ENCODE measurements at regions of chr12 and their contacts with region 1.

Region 1: DNA sequence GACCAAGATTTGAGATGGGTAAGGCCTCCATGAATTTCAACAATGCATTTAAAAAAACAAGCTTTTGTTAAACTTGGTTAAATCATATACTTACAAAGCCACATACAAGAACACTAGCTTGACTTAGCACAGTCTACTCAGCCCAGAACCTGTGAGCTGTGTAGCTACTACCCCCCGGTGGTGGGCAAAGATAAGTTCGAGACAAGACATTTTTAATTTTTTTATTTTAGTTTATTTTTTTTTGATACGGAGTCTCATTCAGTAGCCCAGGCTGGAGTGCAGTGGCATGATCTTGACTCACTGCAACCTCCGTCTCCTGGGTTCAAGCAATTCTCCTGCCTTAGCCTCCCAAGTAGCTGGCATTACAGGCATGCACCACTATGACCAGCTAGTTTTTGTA is 3.7 kb upstream of the NECAP1 start:
- DNase-seq: peak; percentile 43 to 84 (median 67)
- H3K4me3 ChIP-seq: no peak overlapping the region
- H3K4me3 Mint-ChIP-seq: peak overlapping the region in 2 of 7 donors; percentile 28 to 77
- H3K27ac ChIP-seq: no peak overlapping the region
- H3K27ac Mint-ChIP-seq: peak overlapping the region; percentile 76 to 100 (median 88)
- H3K4me1 ChIP-seq: peaks cover 33% of the 10 kb centered on the region
- H3K4me1 Mint-ChIP-seq: peaks cover 43 to 59% (median 49%) of the 10 kb centered on the region in 3 donors
- H3K27me3 ChIP-seq: no peaks in the 10 kb centered on the region
- H3K27me3 Mint-ChIP-seq: peaks cover 0 to 3% of the 10 kb centered on the region in 2 donors

Region 2: DNA sequence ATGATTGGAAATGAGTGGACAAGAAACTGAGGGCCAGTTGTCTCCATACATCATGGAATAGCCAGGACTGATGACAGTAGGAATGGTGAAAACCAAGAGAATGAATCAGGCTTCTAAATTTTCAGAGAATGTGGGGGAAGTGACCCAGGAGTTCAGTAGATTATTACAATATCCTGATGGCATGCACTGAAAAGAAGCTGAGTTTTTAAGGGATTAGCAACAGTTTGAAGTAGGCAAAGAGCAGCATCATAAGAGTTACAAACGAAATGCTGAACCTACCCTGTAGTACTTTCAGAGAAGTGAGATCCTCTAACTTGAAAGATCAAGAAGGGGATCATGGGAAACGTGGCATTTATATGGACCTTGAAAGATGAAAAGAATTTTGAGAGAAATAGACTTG is 218.8 kb before region 1 on chr12:
- CTCF ChIA-PET with region 1: interaction called, 11 read pairs
- POLR2A ChIA-PET with region 1: interaction called, 3 read pairs
- DNase-seq: no peak
- H3K4me3 ChIP-seq: no peak overlapping the region
- H3K4me3 Mint-ChIP-seq: peak overlapping the region in 1 of 7 donors; percentile 34
- H3K27ac ChIP-seq: no peak overlapping the region
- H3K27ac Mint-ChIP-seq: no peak overlapping the region
- H3K4me1 ChIP-seq: no peaks in the 10 kb centered on the region
- H3K4me1 Mint-ChIP-seq: peaks cover 9 to 10% (median 9%) of the 10 kb centered on the region in 3 donors
- H3K27me3 ChIP-seq: no peaks in the 10 kb centered on the region
- H3K27me3 Mint-ChIP-seq: peaks cover 11 to 12% of the 10 kb centered on the region in 2 donors

Region 3: GRCh38 chr12:8026291-8026900 is 52.0 kb before region 1 on chr12:
- CTCF ChIA-PET with region 1: interaction called, 7 read pairs
- POLR2A ChIA-PET with region 1: interaction called, 15 read pairs
- DNase-seq: peak; percentile 92 to 98 (median 97)
- H3K4me3 ChIP-seq: peak overlapping the region; percentile 91
- H3K4me3 Mint-ChIP-seq: peak overlapping the region; percentile 89 to 98 (median 96)
- H3K27ac ChIP-seq: peak overlapping the region; percentile 99
- H3K27ac Mint-ChIP-seq: peak overlapping the region; percentile 97 to 100 (median 100)
- H3K4me1 ChIP-seq: peaks cover 16% of the 10 kb centered on the region
- H3K4me1 Mint-ChIP-seq: peaks cover 19 to 28% (median 20%) of the 10 kb centered on the region in 3 donors
- H3K27me3 ChIP-seq: no peaks in the 10 kb centered on the region
- H3K27me3 Mint-ChIP-seq: peaks cover 0 to 3% of the 10 kb centered on the region in 2 donors

Region 4: GRCh38 chr12:8038659-8039114 is 39.7 kb before region 1 on chr12:
- CTCF ChIA-PET with region 1: interaction called, 130 read pairs
- POLR2A ChIA-PET with region 1: interaction called, 9 read pairs
- DNase-seq: peak in 1 of 5 donors; percentile 22
- H3K4me3 ChIP-seq: peak overlapping the region; percentile 32
- H3K4me3 Mint-ChIP-seq: peak overlapping the region; percentile 3 to 68 (median 63)
- H3K27ac ChIP-seq: no peak overlapping the region
- H3K27ac Mint-ChIP-seq: peak overlapping the region; percentile 66 to 86 (median 77)
- H3K4me1 ChIP-seq: peaks cover 58% of the 10 kb centered on the region
- H3K4me1 Mint-ChIP-seq: peaks cover 60 to 63% (median 60%) of the 10 kb centered on the region in 3 donors
- H3K27me3 ChIP-seq: no peaks in the 10 kb centered on the region
- H3K27me3 Mint-ChIP-seq: no peaks in the 10 kb centered on the region

Region 5: GRCh38 chr12:8065991-8066594 is 12.3 kb before region 1 on chr12 and contains the start of gene C3AR1:
- CTCF ChIA-PET with region 1: interaction called, 21 read pairs
- POLR2A ChIA-PET with region 1: interaction called, 7 read pairs
- DNase-seq: peak; percentile 21 to 74 (median 67)
- H3K4me3 ChIP-seq: peak within 1 kb of the TSS; percentile 24
- H3K4me3 Mint-ChIP-seq: peak within 1 kb of the TSS; percentile 40 to 86 (median 78)
- H3K27ac ChIP-seq: peak within 1 kb of the TSS; percentile 32
- H3K27ac Mint-ChIP-seq: peak within 1 kb of the TSS; percentile 82 to 96 (median 93)
- H3K4me1 ChIP-seq: peaks cover 20% of the 10 kb centered on the region
- H3K4me1 Mint-ChIP-seq: peaks cover 27 to 47% (median 39%) of the 10 kb centered on the region in 3 donors
- H3K27me3 ChIP-seq: no peaks in the 10 kb centered on the region
- H3K27me3 Mint-ChIP-seq: no peaks in the 10 kb centered on the region
- total RNA-seq, gene C3AR1: 1.2 to 2.0 TPM

Measured in CD8-positive, alpha-beta memory T cell (primary cell).